Right ventricle myocardium inferior (tissue), 1 donor: ENCODE measurements at regions of chr6 and their contacts with region 1.

Region 1: DNA sequence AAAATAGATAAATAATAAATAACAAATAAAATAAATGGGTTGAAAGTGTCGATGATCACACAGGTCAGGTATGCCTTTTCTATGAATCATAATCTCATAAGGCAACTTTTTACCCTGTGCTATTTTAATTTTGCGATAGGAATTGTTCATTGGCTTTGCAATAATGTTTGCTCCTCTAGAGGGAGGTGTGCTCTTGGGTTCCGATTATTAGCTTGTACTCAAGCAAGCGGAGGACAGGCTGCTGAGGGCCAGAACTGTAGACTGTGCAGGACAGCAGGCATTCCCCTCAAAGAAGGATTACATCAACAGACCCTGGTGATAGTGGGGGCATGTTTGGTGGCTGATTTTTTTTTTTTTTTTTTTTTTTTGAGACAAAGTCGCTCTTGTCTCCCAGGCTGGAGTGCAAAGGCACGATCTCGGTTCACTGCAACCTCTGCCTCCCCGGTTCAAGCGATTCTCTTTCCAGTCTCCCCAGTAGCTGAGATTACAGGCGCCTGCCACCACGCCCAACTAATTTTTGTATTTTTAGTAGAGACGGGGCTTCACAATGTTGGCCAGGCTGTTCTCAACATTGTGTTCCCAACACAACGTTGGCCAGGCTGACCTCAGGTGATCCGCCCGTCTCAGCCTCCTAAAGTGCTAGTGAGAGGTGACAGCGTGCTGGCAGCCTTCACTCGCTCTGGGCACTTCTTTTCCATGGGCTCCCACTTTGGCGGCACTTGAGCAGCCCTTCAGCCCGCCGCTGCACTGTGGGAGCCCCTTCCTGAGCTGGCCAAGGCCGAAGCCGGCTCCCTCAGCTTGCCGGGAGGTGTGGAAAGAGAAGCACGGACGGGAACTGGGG is 35.6 kb downstream of the RIOK1 start:
- DNase-seq: no peak
- ATAC-seq: peak; percentile 91

Region 2: DNA sequence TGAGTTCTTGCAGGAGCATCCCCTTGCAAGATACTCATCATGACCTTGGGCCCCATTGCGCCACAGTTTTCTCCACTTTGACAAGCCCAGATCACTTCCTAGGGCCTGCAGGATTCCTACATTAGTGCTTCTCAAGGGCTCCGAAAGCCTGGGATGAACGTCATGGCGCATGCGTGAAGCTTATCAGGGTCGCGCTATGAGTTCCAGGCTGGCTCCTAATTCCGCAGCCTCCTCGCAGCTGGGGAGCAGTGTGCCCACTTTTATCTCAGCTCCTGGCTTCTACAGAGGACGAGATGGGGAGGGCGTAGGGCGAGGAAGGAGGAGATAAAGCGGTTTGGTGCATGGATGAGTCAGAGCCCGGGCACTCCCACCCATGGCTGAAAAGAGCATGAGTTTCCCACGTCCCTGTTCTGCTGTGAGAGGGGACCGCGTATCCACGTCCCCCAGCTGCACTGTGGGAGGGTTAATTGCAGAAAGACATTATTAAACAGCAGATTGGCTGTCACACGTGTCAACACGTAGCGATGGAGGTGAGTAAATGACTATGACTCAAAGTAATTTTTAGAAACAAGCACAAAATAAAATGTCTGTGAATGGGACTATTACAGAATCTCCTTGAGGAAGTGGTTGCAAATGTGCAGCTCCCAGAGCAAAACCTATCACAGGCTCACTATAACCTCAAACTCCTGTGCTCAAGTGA is 43.3 kb after region 1 on chr6:
- intact Hi-C with region 1: loop called (anchors 5 kb)
- DNase-seq: no peak
- ATAC-seq: peak; percentile 86

Region 3: GRCh38 chr6:7541175-7542064 is 116.2 kb after region 1 on chr6 and contains the start of gene DSP:
- intact Hi-C with region 1: loop called (anchors 1 kb)
- DNase-seq: peak; percentile 85
- ATAC-seq: peak; percentile 81
- total RNA-seq, gene DSP: 305 TPM

Region 4: GRCh38 chr6:7561153-7561964 is 136.2 kb after region 1 on chr6:
- intact Hi-C with region 1: loop called (anchors 1 kb)
- DNase-seq: peak; percentile 64
- ATAC-seq: peak; percentile 90

Region 5: DNA sequence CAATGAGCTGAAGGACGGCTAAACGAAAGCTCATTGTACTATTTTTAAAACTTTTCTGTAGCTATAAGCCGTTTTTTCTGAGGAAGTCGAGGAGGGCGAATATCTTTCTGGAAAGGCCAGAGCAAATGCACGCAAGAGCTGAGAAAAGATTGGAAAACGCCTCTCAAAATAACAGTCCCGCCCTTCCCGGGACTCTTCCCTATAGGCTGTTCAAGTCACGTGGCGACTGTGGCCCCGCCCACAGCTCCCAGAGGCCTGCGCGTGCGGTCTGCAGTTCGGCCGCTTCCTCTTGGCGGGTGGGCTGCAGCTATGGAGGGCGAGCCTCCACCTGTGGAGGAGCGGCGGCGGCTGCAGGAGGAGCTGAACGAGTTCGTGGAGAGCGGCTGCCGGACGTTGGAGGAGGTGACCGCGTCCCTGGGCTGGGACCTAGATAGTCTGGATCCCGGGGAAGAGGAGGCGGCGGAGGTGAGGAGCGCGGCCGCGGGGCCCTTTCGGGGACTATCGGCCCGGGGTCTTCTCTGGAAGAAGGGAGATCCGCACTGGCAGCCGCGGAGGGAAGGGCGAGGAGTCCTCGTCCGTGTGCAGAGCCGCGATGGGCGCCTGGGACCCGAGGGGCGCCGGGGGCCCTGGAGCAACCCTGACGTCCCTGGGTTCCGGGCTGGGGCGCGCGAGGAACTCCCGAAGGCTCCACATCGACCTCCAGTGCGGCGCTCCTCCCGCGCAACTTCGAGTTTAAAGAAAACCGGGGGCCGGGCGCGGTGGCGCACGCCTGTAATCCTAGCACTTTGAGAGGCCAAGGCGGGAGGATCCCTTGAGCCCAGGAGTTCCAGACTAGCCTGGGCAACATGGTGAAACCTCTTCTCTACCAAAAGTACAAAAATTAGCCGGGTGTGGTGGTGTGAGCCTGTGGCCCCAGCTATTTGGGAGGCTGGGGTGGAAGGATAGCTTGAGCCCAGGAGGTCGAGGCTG is 165.0 kb after region 1 on chr6 and contains the start of gene SNRNP48:
- intact Hi-C with region 1: loop called (anchors 10 kb)
- DNase-seq: peak; percentile 97
- ATAC-seq: peak; percentile 99
- total RNA-seq, gene SNRNP48: 16.2 TPM